ENCODE measurements at regions of chr15 and their contacts with region 1.

Region 1: GRCh38 chr15:51162865-51163762 is 68.4 kb upstream of the TNFAIP8L3 start:
- DNase-seq: peak; percentile 57
- H3K4me3 ChIP-seq: no peak overlapping the region
- H3K27ac ChIP-seq: no peak overlapping the region
- H3K4me1 ChIP-seq: no peaks in the 10 kb centered on the region
- CTCF ChIP-seq: peak; percentile 98

Region 2: DNA sequence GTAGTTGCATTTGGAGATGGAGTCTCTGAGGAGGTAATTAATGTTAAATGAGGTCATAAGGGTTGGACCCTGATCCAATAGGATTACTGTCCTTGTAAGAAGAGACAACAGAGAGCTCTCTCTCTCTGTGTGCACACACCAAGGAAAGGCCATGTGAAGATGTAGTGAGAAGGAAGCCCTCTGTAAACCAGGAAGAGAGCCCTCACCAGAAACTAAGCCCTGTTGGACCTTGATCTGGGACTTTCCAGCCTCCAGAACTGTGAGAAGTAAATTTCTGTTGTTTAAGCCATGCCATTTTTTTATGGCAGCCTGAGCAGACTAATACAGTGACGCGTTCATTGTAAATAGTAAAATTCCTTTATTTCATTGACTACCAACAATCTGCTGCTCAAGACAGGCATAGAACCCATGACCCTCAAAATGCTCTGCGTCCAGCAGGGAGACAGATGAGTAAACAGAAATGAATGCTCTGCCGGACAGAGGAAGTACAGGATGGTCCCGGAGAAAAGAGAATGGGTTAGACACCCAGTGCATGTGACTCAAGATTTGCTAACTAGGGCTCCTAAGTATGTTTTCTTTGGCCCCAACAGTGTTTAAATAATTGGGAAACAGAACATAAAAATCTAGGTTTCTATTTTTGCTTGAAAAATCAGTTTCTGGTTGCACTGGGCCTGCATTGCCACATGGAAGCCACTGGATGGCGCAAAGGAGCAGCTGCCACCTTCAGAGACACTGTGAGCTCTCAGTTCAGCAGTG is 30.6 kb before region 1 on chr15:
- CTCF ChIA-PET with region 1: no interaction called
- POLR2A ChIA-PET with region 1: no interaction called
- intact Hi-C with region 1: no loop called
- DNase-seq: peak; percentile 16
- H3K4me3 ChIP-seq: no peak overlapping the region
- H3K27ac ChIP-seq: no peak overlapping the region
- H3K4me1 ChIP-seq: no peaks in the 10 kb centered on the region
- CTCF ChIP-seq: peak; percentile 83

Region 3: GRCh38 chr15:51181905-51182304 is 18.8 kb after region 1 on chr15:
- CTCF ChIA-PET with region 1: no interaction called
- POLR2A ChIA-PET with region 1: no interaction called
- intact Hi-C with region 1: no loop called
- DNase-seq: no peak
- H3K4me3 ChIP-seq: no peak overlapping the region
- H3K27ac ChIP-seq: no peak overlapping the region
- H3K4me1 ChIP-seq: no peaks in the 10 kb centered on the region
- CTCF ChIP-seq: no peak

Region 4: DNA sequence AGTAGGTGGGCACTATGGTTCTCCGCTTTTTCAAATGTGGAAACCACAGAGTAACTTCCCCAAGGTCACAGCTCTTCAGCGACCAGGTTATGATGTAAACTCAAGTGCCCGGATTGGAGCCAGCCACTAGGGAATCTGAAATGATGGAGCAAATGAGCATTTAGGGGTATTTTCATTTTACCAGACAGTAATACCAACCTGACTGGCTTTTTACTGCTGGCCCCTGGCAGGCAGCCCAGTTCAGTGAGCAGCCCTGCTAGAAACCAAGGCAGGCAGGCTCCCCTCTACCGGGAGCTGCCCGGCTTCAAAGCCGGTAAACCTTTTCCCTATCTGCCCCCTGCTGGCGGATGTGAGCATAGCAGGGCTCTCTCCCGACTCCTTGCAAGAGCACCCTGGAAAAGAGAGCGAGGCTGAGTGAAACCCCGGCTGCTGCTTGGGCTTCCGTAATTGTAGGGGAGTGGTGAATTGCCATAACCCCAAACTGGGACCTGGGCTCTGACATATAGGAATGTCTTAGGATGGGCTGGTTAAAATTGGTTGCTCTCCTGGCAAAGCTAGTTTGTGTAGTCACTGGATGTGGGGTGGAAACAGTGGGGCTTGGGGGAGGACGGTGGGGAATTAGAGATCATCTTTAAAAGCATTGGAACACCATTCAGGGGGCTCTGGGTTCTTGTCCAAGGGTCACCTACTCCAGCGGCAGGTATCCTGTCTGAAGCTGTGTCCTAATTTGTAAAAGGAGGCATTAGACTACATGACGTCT is 29.6 kb after region 1 on chr15:
- CTCF ChIA-PET with region 1: interaction called, 5 read pairs
- POLR2A ChIA-PET with region 1: no interaction called
- intact Hi-C with region 1: loop called (anchors 2 kb)
- DNase-seq: peak; percentile 58
- H3K4me3 ChIP-seq: no peak overlapping the region
- H3K27ac ChIP-seq: no peak overlapping the region
- H3K4me1 ChIP-seq: no peaks in the 10 kb centered on the region
- CTCF ChIP-seq: peak; percentile 92

Region 5: DNA sequence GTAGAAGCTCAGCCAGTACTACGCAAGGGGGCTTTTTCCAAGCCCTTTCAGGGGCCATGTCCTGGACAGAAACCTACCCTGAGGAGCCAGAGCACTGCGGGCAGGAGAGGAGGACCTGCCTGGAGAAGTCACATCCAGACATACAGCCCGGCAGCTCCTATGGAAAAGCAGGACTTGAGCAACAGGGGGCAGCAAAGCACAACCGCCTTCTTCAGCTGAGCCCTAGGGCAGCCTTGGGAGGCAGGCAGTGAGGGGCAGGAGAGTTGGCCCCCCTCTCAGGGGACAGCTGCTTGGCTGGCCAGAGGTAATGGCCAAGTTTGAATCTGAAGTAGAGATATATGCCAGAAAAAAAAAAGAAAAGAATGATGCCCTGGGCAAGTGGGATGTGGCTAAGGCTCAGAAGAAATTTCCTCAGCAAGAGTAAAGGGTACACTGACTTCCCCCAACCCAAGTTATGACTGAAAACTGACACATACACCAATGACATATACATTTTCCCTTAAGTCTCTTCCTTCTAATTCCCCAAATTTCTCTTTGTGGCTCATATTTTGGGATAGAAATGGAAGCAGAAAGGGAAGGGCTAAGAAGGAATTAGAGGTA is 118.4 kb after region 1 on chr15:
- CTCF ChIA-PET with region 1: no interaction called
- POLR2A ChIA-PET with region 1: no interaction called
- intact Hi-C with region 1: loop called (anchors 1 kb)
- DNase-seq: peak; percentile 14
- H3K4me3 ChIP-seq: no peak overlapping the region
- H3K27ac ChIP-seq: no peak overlapping the region
- H3K4me1 ChIP-seq: peaks cover 5% of the 10 kb centered on the region
- CTCF ChIP-seq: peak; percentile 67

Region 6: DNA sequence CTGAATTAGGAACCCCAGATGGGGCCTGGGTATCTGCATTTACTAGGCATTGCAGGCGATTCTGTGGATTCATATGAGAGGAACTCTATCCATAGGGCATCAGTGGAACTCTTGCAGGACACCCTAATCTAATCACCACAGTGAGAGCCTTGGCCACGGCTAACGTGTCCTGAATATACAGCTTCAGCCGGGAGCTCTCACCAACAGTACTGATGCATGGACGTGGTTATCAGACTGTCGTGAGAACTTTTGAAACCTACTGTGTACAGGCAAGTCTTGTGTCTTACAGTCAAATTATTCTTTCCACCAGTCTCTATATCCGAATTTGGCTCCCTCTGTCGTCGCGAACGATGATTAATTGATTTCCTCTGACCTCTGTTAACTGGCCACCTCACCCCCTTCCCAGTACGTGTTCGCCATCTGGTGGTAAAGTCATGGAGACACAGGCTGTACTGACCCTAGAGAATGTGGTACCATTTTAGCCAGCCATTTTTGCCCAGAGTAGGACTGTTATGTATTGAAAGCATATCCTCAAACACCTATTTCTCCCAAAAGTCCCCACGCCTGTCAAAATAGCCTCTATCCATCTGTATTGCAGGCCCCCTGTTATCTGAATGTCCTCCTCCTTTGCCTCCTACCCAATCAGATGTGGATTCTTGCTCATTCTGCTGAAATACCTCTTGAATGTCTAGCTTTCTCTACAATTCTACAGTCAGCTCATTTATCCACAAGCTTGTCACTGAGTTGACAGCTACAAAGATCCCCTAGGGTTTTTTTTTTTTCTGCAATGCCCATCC is 218.1 kb after region 1 on chr15:
- CTCF ChIA-PET with region 1: no interaction called
- POLR2A ChIA-PET with region 1: no interaction called
- intact Hi-C with region 1: loop called (anchors 1 kb)
- DNase-seq: peak; percentile 38
- H3K4me3 ChIP-seq: no peak overlapping the region
- H3K27ac ChIP-seq: no peak overlapping the region
- H3K4me1 ChIP-seq: no peaks in the 10 kb centered on the region
- CTCF ChIP-seq: peak; percentile 84

Measured in OCI-LY7 (cell line).